Right lobe of liver (tissue), 6 donors: ENCODE measurements at regions of chr2 and their contacts with region 1.

Region 1: DNA sequence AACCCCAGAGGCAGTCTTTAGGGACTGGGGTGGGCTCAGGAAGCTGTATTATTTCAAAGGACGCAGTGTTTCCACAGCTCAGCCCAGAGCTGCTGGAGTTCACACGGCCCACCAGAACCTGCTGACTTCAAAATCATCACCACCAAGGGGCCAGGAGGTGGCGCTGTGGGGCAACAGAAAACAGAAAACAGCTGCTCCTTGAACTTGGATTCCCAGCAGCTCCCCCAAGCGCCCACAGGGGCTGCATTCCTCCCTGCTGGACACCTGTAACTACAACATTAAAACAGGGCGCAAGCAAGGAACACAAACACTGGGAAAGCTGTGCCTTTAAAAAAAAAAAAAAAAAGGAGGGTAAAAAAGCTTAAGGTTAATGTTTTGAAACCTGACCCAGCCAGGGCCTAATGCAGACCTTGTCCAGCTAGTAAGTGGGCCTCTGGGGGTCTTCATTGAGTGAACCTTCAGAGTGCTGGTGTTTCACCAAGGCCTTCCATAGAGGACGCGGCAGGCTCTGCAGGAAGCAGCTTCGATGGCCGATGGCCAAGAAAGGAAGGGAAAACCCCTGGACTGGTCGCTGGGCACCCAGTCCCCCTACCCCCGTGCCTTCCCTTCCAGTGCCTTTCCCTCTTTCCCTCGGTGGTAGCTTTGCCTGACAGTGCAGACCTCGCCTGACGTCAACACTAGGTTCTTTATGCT is 25.9 kb downstream of the MLPH start:
- DNase-seq: peak; percentile 81 to 91 (median 86)
- ATAC-seq: peak; percentile 77 to 83 (median 78)
- H3K4me3 ChIP-seq: no peak overlapping the region
- H3K27ac ChIP-seq: peak overlapping the region; percentile 29 to 97 (median 58)
- H3K4me1 ChIP-seq: peaks cover 2 to 50% (median 19%) of the 10 kb centered on the region in 4 donors
- H3K27me3 ChIP-seq: no peaks in the 10 kb centered on the region
- CTCF ChIP-seq: peak; percentile 82 to 91 (median 89)
- POLR2A ChIP-seq: no peak

Region 2: DNA sequence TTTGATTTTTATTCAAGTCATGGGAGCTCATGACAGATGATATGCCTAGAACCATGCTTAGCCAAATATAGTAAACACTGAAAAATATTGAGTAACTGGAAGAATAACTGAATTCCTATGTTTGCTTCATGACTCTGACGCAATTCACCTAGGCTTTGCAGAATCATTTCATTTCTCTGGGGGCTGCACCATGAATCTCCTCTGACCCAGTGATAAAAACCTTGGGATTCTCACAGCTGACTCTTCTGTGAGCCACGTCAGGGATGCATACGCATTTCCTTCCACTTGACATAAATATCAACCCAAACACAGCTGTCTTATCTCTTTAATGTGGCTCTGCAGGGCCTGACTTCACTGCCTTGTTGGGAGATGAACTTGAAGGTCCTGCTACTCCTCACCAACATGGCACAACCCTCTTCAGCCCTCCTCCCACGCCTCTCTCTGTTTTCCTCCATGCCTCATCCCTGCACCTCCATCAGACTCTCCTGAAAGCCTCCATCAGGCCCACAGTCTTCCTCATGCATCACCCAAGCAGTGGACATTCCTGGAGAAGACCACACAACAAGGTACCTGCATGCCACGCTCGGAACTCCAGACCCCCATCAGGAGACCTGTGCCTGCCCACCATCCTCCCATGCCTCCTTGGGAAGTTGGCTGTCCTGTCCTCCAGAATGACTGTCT is 128.8 kb before region 1 on chr2:
- intact Hi-C with region 1: no loop called
- DNase-seq: no peak
- ATAC-seq: no peak
- H3K4me3 ChIP-seq: no peak overlapping the region
- H3K27ac ChIP-seq: no peak overlapping the region
- H3K4me1 ChIP-seq: no peaks in the 10 kb centered on the region
- H3K27me3 ChIP-seq: no peaks in the 10 kb centered on the region
- CTCF ChIP-seq: no peak
- POLR2A ChIP-seq: no peak

Region 3: GRCh38 chr2:237566401-237567235 is 53.7 kb after region 1 on chr2 and contains the start of gene PRLH:
- intact Hi-C with region 1: loop called (anchors 5 kb)
- DNase-seq: peak; percentile 56 to 79 (median 75)
- ATAC-seq: peak; percentile 82 to 91 (median 87)
- H3K4me3 ChIP-seq: no peak within 1 kb of the TSS
- H3K27ac ChIP-seq: no peak within 1 kb of the TSS
- H3K4me1 ChIP-seq: no peaks in the 10 kb centered on the region
- H3K27me3 ChIP-seq: no peaks in the 10 kb centered on the region
- CTCF ChIP-seq: no peak
- POLR2A ChIP-seq: no peak
- total RNA-seq, gene PRLH: not detected

Region 4: DNA sequence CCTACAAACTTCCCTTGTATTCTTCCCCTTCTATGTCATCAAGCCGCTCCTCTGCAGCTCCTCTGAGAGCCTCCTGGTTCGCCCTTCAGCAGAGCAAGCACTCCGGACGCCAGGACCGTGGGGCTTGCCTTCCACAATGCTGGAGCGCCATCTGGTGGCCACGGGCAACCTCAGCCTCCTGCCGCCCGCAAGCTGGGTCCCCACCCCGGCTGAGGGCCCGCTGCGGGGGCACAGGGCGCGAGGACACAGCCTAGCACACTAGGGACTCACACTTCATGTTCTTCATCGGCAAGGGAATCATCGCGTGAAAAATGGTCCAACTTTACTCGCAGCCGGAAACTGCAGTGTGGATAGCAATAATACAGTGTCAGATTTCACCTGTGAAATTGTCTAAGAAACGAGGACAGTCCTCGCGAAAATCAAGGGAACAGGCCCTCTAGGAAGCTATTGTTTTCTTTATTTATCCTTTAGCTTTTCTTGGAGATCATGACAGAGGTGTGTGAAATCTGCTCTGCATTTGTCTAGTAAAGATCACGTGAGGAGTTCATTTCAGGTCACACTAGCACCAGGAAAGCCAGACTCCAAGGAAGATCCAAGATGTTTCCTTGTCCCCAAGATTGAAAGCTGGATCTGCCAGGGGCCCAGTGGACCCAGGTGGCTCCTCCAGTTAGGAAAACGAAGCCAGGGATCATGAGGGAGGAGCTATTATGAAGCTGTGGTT is 59.3 kb after region 1 on chr2:
- intact Hi-C with region 1: loop called (anchors 5 kb)
- DNase-seq: peak; percentile 90 to 92 (median 92)
- ATAC-seq: peak; percentile 84 to 90 (median 86)
- H3K4me3 ChIP-seq: no peak overlapping the region
- H3K27ac ChIP-seq: peak overlapping the region in 2 of 3 donors; percentile 42 to 86
- H3K4me1 ChIP-seq: peaks cover 0 to 20% (median 6%) of the 10 kb centered on the region in 4 donors
- H3K27me3 ChIP-seq: no peaks in the 10 kb centered on the region
- CTCF ChIP-seq: peak; percentile 97 to 99 (median 99)
- POLR2A ChIP-seq: no peak

Region 5: DNA sequence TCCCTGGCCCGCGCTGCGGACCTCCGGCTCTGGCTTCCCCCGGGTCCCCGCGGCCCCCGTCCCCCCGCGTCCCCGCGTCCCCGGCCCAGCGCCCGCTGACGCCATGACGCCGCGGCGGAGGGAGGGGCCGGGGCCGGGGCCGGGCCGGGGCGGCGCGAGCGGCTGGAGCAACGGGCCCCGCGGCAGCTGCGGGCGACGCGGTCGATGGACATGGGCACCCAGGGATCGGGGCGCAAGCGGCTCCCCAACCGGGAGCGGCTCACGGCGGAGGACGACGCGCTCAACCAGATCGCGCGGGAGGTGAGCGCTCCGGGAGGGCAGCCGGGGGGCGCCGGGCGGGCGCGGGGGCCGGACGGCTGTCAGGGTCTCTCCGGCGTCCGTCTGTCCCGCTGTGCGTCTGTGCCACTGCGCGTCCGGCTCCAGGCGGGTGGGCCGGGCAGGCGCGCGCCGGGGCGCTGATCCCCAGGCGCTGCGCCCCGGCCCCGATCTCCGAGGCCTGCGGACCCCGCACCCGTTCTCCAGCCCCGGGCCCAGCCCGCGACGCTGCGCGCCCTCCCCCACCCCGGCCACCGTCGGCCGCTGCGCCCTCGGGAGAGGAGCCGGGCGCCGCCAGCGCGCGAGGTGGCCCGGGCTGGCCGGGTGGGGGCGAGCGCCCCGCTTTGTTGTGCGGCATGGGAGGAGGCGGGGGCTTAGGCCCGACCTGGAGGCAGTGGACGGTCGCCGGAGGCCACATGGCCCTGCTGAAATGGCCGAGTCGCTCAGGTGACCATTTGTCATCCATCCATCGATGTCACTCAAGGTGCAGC is 114.7 kb after region 1 on chr2 and contains the start of gene LRRFIP1:
- intact Hi-C with region 1: no loop called
- DNase-seq: peak in 2 of 3 donors; percentile 46 to 59
- ATAC-seq: peak; percentile 62 to 83 (median 76)
- H3K4me3 ChIP-seq: peak within 1 kb of the TSS; percentile 43 to 78 (median 62)
- H3K27ac ChIP-seq: peak within 1 kb of the TSS in 2 of 3 donors; percentile 50 to 69
- H3K4me1 ChIP-seq: peaks cover 0 to 8% (median 1%) of the 10 kb centered on the region in 4 donors
- H3K27me3 ChIP-seq: no peaks in the 10 kb centered on the region
- CTCF ChIP-seq: peak in 1 of 4 donors; percentile 17
- POLR2A ChIP-seq: peak; percentile 36
- total RNA-seq, gene LRRFIP1: 29.4 to 56.3 (median 49.7) TPM

Region 6: DNA sequence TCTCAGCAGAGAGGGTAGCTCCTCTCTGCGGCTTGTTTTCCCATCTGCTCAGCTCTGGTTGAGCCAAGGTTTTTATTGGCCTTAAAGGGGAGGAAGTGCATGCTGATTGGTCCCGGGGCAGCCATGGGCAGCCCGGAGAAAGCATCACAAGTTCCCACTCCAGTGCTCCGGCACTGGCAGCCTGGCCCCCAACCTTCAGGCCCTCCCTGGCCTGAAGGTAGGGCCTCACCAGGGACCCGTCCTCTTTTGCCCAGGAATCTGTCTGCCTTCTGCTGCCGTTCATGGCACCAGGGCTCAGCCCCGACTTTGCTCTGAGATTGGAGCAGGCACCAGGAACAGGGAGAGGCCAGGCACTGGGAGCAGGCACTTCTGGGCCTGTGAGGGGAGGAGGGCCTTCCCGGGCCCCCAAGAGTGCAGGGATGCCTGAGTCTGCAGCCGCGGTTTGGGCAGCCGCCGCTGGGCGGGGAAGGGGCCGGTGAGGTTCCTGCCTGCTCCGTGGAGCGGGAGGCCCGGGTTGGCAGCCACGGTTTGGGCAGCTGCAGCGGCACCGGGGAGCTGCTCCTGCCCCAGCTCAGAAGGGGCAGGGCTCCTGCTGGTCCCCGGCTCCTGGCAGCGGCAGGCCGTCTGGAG is 708.1 kb after region 1 on chr2:
- intact Hi-C with region 1: no loop called
- DNase-seq: no peak
- ATAC-seq: peak in 1 of 4 donors; percentile 15
- H3K4me3 ChIP-seq: no peak overlapping the region
- H3K27ac ChIP-seq: no peak overlapping the region
- H3K4me1 ChIP-seq: peaks cover 0 to 11% (median 3%) of the 10 kb centered on the region in 4 donors
- H3K27me3 ChIP-seq: no peaks in the 10 kb centered on the region
- CTCF ChIP-seq: no peak
- POLR2A ChIP-seq: no peak